Activated B cell treated with CpG ODN at 0.5 μM for 24 hours (primary cell): ENCODE measurements at regions of chr12 and their contacts with region 1.

Region 1: DNA sequence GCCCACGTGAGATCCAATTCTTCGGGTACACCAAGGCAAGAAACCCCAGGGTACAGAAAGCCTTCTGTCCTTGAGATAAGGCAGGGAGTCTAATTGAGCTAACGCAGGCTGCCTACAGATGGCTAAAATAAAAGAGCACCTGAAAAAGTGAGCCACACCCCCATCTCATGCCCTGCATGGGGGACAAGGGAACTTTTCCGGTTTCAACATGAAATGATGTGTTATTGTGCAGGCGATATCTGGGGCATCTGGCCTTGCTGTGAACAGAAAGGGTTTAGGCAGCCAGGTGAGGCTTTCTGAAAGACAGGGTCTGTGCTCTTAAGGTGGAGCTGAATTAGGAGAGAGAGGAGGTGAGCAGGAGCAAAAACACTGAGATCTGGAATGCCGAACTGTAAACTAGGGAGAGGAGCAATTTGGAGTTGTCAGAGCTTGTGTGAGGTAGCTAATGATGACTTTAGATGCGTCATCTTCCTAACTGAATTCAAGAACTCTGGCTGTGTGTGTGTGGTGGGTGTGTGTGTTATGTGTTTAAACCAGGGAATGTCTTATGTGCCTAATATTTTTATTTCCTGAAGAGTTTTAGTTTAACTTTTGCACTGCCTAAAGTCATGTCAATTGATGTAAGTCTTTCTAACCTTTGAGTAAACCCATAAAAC is 20.1 kb upstream of the LDHB start:
- DNase-seq: no peak
- ATAC-seq: no peak
- H3K4me3 Mint-ChIP-seq: no peak overlapping the region
- H3K27ac Mint-ChIP-seq: no peak overlapping the region
- H3K4me1 Mint-ChIP-seq: no peaks in the 10 kb centered on the region
- H3K27me3 Mint-ChIP-seq: peaks cover 13% of the 10 kb centered on the region
- CTCF ChIP-seq: no peak

Region 2: DNA sequence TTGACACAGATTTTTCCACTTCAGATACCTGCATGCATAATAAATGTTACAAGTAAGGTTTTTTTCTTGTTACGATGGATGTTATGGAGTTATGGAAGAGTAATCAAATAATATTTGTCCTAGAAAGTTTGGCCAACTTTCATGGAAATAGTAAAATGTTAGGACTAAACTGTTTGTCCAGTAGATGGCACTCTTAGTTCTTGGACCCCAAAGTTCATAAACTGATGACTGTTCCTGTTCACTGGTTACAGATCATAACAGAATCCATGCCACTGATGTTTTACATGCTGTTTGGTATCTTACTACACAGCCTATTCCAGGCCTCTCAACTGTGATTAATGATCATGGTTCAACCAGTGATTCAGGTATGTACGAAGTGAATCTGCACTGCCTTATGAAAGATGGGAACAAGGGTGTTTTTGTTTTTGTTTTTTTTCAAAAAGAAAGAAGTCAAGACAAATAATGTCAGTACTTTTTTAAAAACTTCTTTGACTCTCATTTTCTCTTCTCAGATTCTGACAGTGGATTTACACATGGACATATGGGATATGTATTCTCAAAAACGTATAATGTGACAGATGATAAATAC is 1031.4 kb before region 1 on chr12:
- CTCF ChIA-PET with region 1: no interaction called
- POLR2A ChIA-PET with region 1: no interaction called
- intact Hi-C with region 1: loop called (anchors 2 kb)
- DNase-seq: no peak
- ATAC-seq: no peak
- H3K4me3 Mint-ChIP-seq: no peak overlapping the region
- H3K27ac Mint-ChIP-seq: no peak overlapping the region
- H3K4me1 Mint-ChIP-seq: no peaks in the 10 kb centered on the region
- H3K27me3 Mint-ChIP-seq: no peaks in the 10 kb centered on the region
- CTCF ChIP-seq: no peak

Region 3: GRCh38 chr12:20950248-20950647 is 727.5 kb before region 1 on chr12:
- CTCF ChIA-PET with region 1: no interaction called
- POLR2A ChIA-PET with region 1: no interaction called
- intact Hi-C with region 1: loop called (anchors 2 kb)
- DNase-seq: no peak
- ATAC-seq: no peak
- H3K4me3 Mint-ChIP-seq: no peak overlapping the region
- H3K27ac Mint-ChIP-seq: no peak overlapping the region
- H3K4me1 Mint-ChIP-seq: no peaks in the 10 kb centered on the region
- H3K27me3 Mint-ChIP-seq: no peaks in the 10 kb centered on the region
- CTCF ChIP-seq: no peak

Region 4: DNA sequence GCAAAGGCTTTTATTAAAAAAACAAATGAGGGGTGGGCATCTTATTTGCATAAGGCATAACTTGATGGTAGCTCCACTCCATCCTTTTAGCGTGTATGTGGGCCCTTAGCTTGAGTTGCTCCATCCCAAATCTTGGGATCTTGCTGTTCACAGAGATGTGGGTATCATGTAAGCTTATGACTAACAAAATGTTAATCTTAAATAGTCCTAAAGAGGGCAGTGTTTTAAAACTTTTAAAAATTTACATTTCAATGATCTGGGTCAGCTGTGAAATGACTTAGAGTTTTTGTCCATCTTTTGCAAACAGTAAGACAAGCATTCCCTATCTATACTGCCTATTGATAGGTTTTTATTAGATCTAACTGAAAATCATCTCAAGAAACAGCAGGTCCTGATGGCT is 429.1 kb before region 1 on chr12:
- CTCF ChIA-PET with region 1: interaction called, 19 read pairs
- POLR2A ChIA-PET with region 1: no interaction called
- intact Hi-C with region 1: loop called (anchors 1 kb)
- DNase-seq: no peak
- ATAC-seq: no peak
- H3K4me3 Mint-ChIP-seq: no peak overlapping the region
- H3K27ac Mint-ChIP-seq: no peak overlapping the region
- H3K4me1 Mint-ChIP-seq: no peaks in the 10 kb centered on the region
- H3K27me3 Mint-ChIP-seq: no peaks in the 10 kb centered on the region
- CTCF ChIP-seq: no peak

Region 5: DNA sequence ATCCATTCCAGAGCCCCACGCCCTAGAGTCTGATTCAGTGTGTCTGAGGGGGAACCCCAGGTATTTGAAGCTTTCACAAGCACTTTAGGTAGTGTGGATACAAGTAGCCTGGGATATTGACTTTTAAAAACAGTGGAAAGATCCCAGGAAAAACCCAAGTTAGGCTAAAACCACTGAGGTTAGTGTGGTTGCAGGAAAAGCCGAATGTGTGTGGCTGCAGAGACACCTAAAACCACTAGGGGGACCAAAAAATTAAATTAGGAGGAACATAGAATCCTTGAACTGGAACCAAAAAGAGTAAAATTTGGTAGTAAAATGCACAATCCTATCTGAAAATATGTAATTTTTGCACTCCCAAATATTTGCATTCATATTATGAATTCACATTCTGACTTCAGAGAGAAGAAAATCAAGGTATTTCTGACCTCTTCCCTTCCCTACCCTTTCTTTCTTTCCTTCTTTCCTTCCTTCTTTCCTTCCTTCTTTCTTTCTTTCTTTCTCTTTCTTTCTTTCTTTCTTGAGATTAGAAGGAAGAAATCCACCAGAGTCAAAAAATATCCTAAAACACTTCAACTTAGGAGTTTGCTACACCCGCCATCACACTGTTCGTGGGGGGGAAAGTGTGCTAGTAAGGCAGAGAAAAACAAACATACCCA is 380.9 kb before region 1 on chr12:
- CTCF ChIA-PET with region 1: interaction called, 9 read pairs
- POLR2A ChIA-PET with region 1: no interaction called
- intact Hi-C with region 1: loop called (anchors 1 kb)
- DNase-seq: no peak
- ATAC-seq: no peak
- H3K4me3 Mint-ChIP-seq: no peak overlapping the region
- H3K27ac Mint-ChIP-seq: no peak overlapping the region
- H3K4me1 Mint-ChIP-seq: peaks cover 1% of the 10 kb centered on the region
- H3K27me3 Mint-ChIP-seq: peaks cover under 1% of the 10 kb centered on the region
- CTCF ChIP-seq: no peak

Region 6: DNA sequence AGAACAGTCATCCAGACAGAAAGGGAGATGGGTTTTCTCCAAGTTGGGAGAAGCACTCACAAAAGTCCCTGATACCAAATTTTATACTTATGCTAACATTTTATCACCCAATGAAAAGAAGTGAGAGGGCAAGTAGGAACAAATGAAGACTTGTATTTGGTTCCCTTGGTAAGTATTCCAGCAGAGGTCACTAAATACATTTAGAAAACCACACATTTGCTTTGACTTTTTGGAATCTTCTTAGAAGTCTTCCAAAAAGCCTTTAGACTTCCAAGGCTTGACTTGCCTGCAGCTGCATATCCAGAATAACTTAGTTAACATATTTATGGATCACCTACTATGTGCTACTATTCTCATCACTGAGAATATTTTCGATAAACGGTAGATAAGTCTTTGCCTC is 70.0 kb before region 1 on chr12:
- CTCF ChIA-PET with region 1: interaction called, 7 read pairs
- POLR2A ChIA-PET with region 1: no interaction called
- intact Hi-C with region 1: loop called (anchors 2 kb)
- DNase-seq: no peak
- ATAC-seq: no peak
- H3K4me3 Mint-ChIP-seq: no peak overlapping the region
- H3K27ac Mint-ChIP-seq: no peak overlapping the region
- H3K4me1 Mint-ChIP-seq: no peaks in the 10 kb centered on the region
- H3K27me3 Mint-ChIP-seq: no peaks in the 10 kb centered on the region
- CTCF ChIP-seq: no peak

Region 7: DNA sequence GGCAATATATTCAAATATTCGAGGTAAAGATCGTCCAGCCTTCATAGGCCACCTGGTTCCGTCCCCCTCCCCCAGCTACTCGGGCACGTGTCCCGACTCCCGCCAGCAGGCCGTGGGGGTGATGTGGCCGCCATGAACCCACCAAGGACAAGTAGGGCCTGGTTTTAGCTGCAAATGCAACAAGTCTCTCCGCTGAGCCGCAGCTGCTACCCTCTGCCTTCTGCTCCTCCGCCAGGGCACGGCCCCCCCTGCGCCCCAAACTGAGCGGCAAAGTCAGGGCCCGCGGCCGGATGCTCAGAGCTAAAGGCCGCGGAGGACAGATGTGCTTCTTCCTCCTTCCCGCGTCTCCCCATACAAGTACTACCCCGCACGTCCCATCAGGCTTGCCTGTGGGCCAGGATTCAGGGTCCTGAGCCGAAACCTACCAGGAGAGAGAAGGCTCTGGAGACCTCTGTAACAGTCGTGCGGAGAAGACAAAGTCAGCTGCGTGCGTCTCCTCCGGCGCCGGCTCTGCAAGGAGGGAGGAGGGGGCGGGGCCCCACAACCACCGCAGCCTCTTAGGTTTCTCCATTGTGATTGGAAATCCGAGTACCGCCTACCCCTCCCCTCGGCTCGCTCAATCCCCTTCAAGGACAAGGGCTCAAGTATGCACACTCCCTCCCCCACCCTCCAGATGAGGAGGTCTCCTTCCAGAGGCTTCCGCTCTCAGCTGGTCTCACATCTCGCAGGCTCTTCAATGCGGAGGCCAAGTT is 20.2 kb before region 1 on chr12 and contains the start of gene LDHB:
- CTCF ChIA-PET with region 1: interaction called, 5 read pairs
- POLR2A ChIA-PET with region 1: interaction called, 3 read pairs
- intact Hi-C with region 1: loop called (anchors 1 kb)
- DNase-seq: peak; percentile 72
- ATAC-seq: peak; percentile 97
- H3K4me3 Mint-ChIP-seq: peak within 1 kb of the TSS; percentile 99
- H3K27ac Mint-ChIP-seq: peak within 1 kb of the TSS; percentile 97
- H3K4me1 Mint-ChIP-seq: peaks cover 24% of the 10 kb centered on the region
- H3K27me3 Mint-ChIP-seq: peaks cover 3% of the 10 kb centered on the region
- CTCF ChIP-seq: no peak
- total RNA-seq, gene LDHB: 385 and 440 TPM in 2 replicates